ENCODE measurements at regions of chr10 and their contacts with region 1.

Region 1: DNA sequence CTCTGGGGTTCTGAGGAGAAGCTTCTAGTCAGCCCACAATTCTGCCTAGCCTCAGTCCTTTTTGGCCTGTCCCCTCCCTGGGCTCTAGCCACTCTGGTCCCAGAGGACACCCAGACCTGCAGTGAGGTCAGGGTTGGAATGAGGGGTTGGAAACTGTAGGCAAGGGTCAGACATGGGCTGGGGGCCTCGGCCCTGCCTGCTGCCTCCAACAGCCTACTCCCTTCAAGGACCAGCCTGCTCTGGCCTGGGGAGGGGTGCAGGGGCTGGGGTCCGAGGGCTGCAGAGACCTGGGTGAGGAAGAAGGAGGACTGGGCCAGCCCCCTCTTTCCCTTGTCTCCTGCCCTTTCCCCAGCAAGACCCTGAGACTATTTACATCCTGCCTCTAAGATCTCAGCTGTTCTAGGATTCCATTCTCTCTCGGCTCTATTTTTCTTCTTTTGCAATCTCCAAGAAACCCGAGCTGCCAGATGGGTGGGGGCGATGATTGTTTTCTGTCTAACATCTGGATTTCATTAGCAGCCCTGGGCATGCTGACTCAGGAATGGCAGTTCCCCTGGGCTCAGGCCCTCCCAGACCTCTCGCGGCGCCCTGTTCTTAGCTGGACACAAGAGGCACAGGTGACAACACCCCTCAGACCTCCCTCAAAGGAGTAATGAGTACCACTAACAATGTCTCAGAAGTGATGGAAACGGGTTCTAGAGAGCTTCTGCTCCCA is 23.1 kb downstream of the ZCCHC24 start:
- DNase-seq: peak in 1 of 2 donors; percentile 67
- ATAC-seq: no peak
- H3K4me3 ChIP-seq: no peak overlapping the region
- H3K27ac ChIP-seq: peak overlapping the region; percentile 83 to 90 (median 88)
- H3K4me1 ChIP-seq: peaks cover 80 to 88% of the 10 kb centered on the region in 2 donors
- H3K27me3 ChIP-seq: no peaks in the 10 kb centered on the region
- CTCF ChIP-seq: no peak
- POLR2A ChIP-seq: no peak

Region 2: GRCh38 chr10:79298403-79299244 is 123.7 kb before region 1 on chr10:
- in situ Hi-C with region 1: no loop called
- intact Hi-C with region 1: no loop called
- DNase-seq: peak in 1 of 2 donors; percentile 64
- ATAC-seq: peak in 1 of 2 donors; percentile 43
- H3K4me3 ChIP-seq: no peak overlapping the region
- H3K27ac ChIP-seq: peak overlapping the region in 3 of 4 donors; percentile 10 to 30 (median 13)
- H3K4me1 ChIP-seq: no peaks in the 10 kb centered on the region
- H3K27me3 ChIP-seq: no peaks in the 10 kb centered on the region
- CTCF ChIP-seq: no peak
- POLR2A ChIP-seq: no peak

Region 3: DNA sequence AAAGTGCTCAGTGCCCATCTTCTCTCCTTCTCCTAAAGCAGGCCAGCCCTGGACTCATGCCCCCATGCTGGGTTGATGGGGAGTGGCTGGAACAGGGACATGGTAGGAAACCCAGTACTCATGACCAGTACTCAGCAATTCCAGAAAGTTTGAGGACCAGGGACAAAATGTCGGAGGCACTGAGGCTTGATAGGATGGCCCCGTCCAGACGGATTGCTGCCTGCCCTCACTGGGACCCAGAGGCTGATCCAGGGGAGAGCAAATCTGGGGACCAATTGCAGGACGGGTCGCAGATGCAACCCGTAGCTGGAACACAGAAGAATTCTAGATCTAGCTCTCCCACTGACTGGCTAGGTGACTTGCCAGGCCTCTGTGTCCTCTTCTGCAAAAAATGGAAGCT is 17.9 kb after region 1 on chr10:
- in situ Hi-C with region 1: no loop called
- intact Hi-C with region 1: loop called (anchors 2 kb)
- DNase-seq: peak in 1 of 2 donors; percentile 21
- ATAC-seq: no peak
- H3K4me3 ChIP-seq: peak overlapping the region in 2 of 4 donors; percentile 16 to 31
- H3K27ac ChIP-seq: peak overlapping the region; percentile 91 to 98 (median 94)
- H3K4me1 ChIP-seq: peaks cover 86 to 89% of the 10 kb centered on the region in 2 donors
- H3K27me3 ChIP-seq: no peaks in the 10 kb centered on the region
- CTCF ChIP-seq: no peak
- POLR2A ChIP-seq: no peak